SK-N-SH (cell line): ENCODE measurements at regions of chr12 and their contacts with region 1.

Region 1: DNA sequence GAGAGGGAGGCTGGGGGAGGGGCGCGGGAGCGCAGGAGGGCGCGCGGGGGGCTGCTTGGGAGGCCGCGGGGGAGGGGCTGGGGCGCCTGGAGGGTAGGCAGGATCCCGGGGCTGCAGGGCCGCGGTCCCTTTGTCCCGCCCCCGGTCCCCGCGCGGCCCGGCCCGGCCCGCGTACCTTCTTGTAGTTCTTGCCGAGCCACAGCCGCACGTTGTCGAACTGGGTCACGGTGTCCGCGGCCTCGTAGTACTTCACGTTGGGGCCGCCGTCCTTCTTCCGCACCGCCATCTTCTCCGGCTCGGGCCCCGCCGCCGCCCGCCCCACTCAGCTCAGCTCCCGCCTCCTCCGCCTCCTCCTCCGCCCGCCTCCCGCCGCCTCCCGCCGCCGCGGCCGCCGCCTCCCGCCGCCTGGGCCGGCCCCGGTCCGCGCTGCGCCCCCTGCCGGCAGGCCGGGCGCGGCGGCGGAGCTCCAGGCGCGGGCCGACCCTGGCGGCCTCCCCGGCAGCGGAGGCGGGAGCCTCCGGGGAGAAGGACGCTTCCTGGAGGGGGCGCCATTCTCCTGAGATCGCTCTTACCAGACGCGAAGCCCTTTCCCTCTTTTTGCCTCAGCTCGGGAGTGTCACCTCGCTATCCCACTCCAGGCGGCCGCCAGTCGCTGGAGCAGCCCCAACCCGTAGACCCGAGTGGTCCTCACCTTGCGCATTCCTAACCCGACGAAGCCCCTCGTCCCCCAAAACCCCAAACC is at the start of gene SMARCC2:
- DNase-seq: peak; percentile 97
- H3K4me3 ChIP-seq: peak within 1 kb of the TSS; percentile 87 to 91
- H3K27ac ChIP-seq: peak within 1 kb of the TSS; percentile 83 to 87
- H3K4me1 ChIP-seq: peaks cover 8 to 13% of the 10 kb centered on the region in 2 experiments; a peak in 2 of 4 replicates
- H3K27me3 ChIP-seq: no peaks in the 10 kb centered on the region
- CTCF ChIP-seq: peak; percentile 70
- EP300 ChIP-seq: no peak
- RAD21 ChIP-seq: peak; percentile 50
- polyA plus RNA-seq, gene SMARCC2: 64.3 and 73.0 TPM in 2 replicates

Region 2: GRCh38 chr12:56098592-56098991 is 90.8 kb before region 1 on chr12:
- CTCF ChIA-PET with region 1: no interaction called
- POLR2A ChIA-PET with region 1: no interaction called
- DNase-seq: no peak
- H3K4me3 ChIP-seq: no peak overlapping the region
- H3K27ac ChIP-seq: no peak overlapping the region
- H3K4me1 ChIP-seq: peaks cover 0 to 4% of the 10 kb centered on the region in 2 experiments; a peak in 2 of 4 replicates
- H3K27me3 ChIP-seq: peaks cover 30% of the 10 kb centered on the region; the same call in 1 of the 2 replicates
- CTCF ChIP-seq: no peak
- EP300 ChIP-seq: no peak
- RAD21 ChIP-seq: no peak

Region 3: DNA sequence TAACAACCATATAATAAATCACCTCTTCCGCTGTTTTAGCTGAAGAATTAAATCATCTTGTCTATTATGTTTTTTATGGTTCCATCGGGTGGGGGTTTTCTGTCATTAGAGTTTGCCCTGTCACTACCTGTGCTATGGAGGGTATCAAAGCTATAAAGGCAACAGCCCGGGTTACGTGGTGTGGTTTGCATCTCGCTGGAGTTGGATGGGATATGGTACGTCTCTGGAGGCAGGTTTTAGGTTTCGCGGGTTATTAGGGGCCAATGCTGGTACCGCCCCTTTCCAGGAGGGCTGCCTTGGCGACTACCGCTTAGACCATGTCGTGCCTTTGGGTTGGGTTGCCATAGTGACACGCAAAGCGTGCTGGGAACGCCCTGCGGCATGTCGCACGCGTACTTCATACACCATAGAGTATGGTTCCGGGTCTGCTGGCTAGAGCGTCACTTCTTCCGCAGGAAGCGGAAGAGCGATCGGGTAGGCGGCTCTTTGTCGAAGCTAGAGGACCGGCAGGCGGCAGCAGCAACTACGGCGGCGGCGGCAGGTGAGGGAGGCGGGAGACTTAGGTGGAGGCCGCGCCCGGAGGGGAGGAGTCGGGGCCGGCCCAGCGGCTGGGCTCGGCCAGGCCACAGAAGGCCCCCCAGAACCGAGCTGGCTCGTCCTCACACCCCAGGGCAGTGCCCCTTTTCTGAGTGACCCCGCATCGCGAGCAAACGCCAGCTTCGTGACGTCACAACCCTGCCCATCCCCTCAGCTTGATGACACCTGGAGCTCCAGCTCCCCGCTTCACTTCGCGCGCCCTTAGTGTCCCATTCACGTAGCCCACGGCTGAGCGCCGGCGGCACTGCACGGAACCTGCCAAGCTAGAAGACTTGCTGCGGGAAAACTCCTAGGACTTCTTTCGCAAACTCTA is 71.3 kb before region 1 on chr12 and contains the start of gene ZC3H10:
- CTCF ChIA-PET with region 1: interaction called, 272 read pairs
- POLR2A ChIA-PET with region 1: interaction called, 21 read pairs
- DNase-seq: peak; percentile 89
- H3K4me3 ChIP-seq: peak within 1 kb of the TSS; percentile 89 to 94
- H3K27ac ChIP-seq: peak within 1 kb of the TSS; percentile 93 to 95
- H3K4me1 ChIP-seq: peaks cover 18 to 20% of the 10 kb centered on the region in 2 experiments; a peak in 3 of 4 replicates
- H3K27me3 ChIP-seq: no peaks in the 10 kb centered on the region
- CTCF ChIP-seq: peak; percentile 51
- EP300 ChIP-seq: peak in 1 of 2 experiments; percentile 51; a peak in 2 of 4 replicates
- RAD21 ChIP-seq: no peak
- polyA plus RNA-seq, gene ZC3H10: 1.9 and 2.0 TPM in 2 replicates

Region 4: GRCh38 chr12:56137853-56138571 is 51.3 kb before region 1 on chr12:
- CTCF ChIA-PET with region 1: interaction called, 16 read pairs
- POLR2A ChIA-PET with region 1: no interaction called
- DNase-seq: no peak
- H3K4me3 ChIP-seq: no peak overlapping the region
- H3K27ac ChIP-seq: no peak overlapping the region
- H3K4me1 ChIP-seq: no peaks in the 10 kb centered on the region
- H3K27me3 ChIP-seq: no peaks in the 10 kb centered on the region
- CTCF ChIP-seq: no peak
- EP300 ChIP-seq: no peak
- RAD21 ChIP-seq: no peak

Region 5: DNA sequence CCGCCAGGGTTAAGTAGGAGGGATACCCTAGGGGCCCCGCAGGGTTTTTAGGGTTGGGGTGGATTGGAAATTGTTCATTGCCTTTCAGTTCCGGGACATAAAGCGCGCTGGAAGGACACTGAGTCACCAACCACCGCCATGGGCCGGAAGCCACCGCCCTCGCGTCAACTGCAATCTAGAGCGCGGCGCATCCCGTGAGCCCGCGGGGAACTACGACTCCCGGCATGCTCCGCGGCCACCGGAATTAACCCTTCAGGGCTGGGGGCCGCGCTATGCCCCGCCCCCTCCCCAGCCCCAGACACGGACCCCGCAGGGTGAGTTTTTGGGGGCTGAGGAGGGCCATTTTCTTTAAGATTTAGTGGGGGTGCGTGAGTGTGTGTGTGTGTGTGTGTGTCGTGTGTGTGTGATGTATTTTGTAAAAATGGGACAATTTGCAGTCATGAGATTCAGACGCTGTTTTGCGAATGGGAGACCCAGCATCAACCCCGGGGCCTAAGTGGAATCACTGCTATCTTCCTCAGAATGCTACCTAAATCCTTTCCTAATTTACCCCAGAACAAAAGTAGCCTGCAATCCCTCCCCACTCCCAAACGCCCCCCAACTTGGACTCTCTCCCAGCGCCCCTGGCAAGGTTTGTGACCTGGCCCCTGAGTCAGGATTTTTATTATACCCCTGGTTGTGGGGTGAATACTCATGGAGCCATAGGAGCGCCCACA is 36.9 kb before region 1 on chr12 and contains the start of gene MYL6B:
- CTCF ChIA-PET with region 1: interaction called, 14 read pairs
- POLR2A ChIA-PET with region 1: no interaction called
- DNase-seq: peak; percentile 93
- H3K4me3 ChIP-seq: peak within 1 kb of the TSS; percentile 62 to 87
- H3K27ac ChIP-seq: peak within 1 kb of the TSS; percentile 85 to 86
- H3K4me1 ChIP-seq: peaks cover 23% of the 10 kb centered on the region in 2 experiments; a peak in 3 of 4 replicates
- H3K27me3 ChIP-seq: no peaks in the 10 kb centered on the region
- CTCF ChIP-seq: no peak
- EP300 ChIP-seq: no peak; a peak in 1 of 4 replicates
- RAD21 ChIP-seq: no peak
- polyA plus RNA-seq, gene MYL6B: 203 and 234 TPM in 2 replicates

Region 6: GRCh38 chr12:56178347-56178746 is 11.0 kb before region 1 on chr12:
- CTCF ChIA-PET with region 1: interaction called, 30 read pairs
- POLR2A ChIA-PET with region 1: no interaction called
- DNase-seq: no peak
- H3K4me3 ChIP-seq: no peak overlapping the region
- H3K27ac ChIP-seq: no peak overlapping the region
- H3K4me1 ChIP-seq: no peaks in the 10 kb centered on the region
- H3K27me3 ChIP-seq: no peaks in the 10 kb centered on the region
- CTCF ChIP-seq: no peak
- EP300 ChIP-seq: no peak
- RAD21 ChIP-seq: no peak

Region 7: DNA sequence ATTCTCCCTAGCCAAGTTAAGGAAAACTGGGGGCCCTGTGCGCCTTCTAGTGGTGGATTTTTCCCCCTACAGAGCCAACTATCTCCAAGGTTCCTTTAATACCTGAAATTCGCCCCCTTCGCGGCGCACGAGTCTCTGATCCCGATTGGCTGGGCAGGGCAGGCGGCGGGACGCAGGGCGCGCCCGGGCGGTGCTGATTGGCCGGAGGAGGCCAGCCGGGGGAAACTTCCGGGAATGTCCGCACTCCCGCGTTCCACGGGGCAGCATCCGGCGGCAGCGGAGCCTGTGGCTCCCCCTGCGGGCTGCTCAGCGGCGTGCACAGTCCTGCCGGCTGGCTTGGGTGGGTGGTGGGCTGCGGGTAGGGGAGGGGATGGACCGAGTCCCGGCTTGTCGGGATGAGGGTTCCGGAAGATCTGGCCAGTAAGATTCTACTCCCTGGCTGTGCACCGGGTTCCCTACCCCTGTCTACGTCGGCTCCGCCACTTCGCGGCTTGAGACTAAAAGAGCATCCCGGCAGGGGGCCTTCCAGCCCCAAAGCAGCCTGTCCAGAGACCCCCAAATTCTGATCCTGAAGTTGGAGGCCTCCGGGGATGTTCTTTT is 34.9 kb after region 1 on chr12 and contains the start of gene NABP2:
- CTCF ChIA-PET with region 1: interaction called, 40 read pairs
- POLR2A ChIA-PET with region 1: interaction called, 8 read pairs
- DNase-seq: peak; percentile 98
- H3K4me3 ChIP-seq: peak within 1 kb of the TSS; percentile 67 to 97
- H3K27ac ChIP-seq: peak within 1 kb of the TSS; percentile 62 to 64
- H3K4me1 ChIP-seq: peaks cover 13 to 22% of the 10 kb centered on the region in 2 experiments; a peak in 2 of 4 replicates
- H3K27me3 ChIP-seq: no peaks in the 10 kb centered on the region
- CTCF ChIP-seq: peak; percentile 89
- EP300 ChIP-seq: no peak; a peak in 1 of 4 replicates
- RAD21 ChIP-seq: peak; percentile 56
- polyA plus RNA-seq, gene NABP2: 49.3 and 52.3 TPM in 2 replicates

Region 8: GRCh38 chr12:56266693-56267442 is 77.5 kb after region 1 on chr12 and contains the start of gene COQ10A:
- CTCF ChIA-PET with region 1: interaction called, 31 read pairs
- POLR2A ChIA-PET with region 1: interaction called, 4 read pairs
- DNase-seq: peak; percentile 98
- H3K4me3 ChIP-seq: peak within 1 kb of the TSS; percentile 69 to 74
- H3K27ac ChIP-seq: peak within 1 kb of the TSS; percentile 88 to 92
- H3K4me1 ChIP-seq: peaks cover 4 to 8% of the 10 kb centered on the region in 2 experiments; a peak in 1 of 4 replicates
- H3K27me3 ChIP-seq: no peaks in the 10 kb centered on the region
- CTCF ChIP-seq: peak; percentile 62
- EP300 ChIP-seq: no peak
- RAD21 ChIP-seq: no peak
- polyA plus RNA-seq, gene COQ10A: 42.2 and 56.2 TPM in 2 replicates